ENCODE measurements at regions of chr13 and their contacts with region 1.

Region 1: DNA sequence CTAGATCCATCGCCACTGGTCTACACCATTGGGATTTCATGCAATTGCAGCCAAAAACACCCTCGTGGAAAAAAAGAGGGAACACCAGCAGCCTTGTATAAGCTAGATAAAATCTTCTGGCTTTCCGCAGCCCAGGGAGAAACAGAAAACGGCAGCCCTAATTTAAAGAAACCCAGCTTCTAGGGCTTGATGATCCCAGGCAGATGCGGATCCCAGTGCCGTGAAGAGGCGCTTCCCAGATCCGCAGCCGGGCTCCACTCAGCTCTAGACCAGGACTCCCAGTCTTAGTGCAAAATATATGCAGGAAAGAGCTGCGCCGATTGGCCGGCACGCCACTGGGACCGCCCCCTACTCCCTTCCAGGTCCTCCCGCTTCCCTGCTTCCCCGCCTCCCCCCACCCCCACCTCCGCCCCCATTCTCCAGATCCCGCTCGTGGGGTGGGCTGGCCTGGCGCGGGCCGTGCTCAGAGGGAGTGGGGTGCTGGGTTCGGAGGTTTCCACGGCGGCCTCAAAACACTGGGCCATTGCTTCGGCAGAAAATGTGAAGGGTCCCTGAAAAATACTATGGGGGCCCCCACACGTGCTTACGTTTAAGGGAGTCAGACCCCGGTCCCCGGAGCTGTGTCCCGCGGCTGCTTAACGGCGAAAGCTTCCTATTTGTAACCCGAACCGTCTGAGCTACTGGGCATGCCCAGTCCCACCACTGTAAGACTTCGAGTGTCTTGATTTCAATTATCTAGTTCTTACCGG is 63.1 kb downstream of the SERP2 start:
- DNase-seq: peak; percentile 93
- H3K27ac ChIP-seq: peak overlapping the region; percentile 93
- CTCF ChIP-seq: no peak

Region 2: GRCh38 chr13:43908156-43909131 is 528.3 kb before region 1 on chr13:
- CTCF ChIA-PET with region 1: interaction called, 11 read pairs
- POLR2A ChIA-PET with region 1: no interaction called
- DNase-seq: peak; percentile 39
- H3K27ac ChIP-seq: no peak overlapping the region
- CTCF ChIP-seq: peak; percentile 58

Region 3: GRCh38 chr13:44276061-44276460 is 160.7 kb before region 1 on chr13:
- CTCF ChIA-PET with region 1: no interaction called
- POLR2A ChIA-PET with region 1: interaction called, 11 read pairs
- DNase-seq: no peak
- H3K27ac ChIP-seq: no peak overlapping the region
- CTCF ChIP-seq: no peak

Measured in RWPE1 (cell line).